MCF 10A (cell line): ENCODE measurements at regions of chr15 and their contacts with region 1.

Region 1: DNA sequence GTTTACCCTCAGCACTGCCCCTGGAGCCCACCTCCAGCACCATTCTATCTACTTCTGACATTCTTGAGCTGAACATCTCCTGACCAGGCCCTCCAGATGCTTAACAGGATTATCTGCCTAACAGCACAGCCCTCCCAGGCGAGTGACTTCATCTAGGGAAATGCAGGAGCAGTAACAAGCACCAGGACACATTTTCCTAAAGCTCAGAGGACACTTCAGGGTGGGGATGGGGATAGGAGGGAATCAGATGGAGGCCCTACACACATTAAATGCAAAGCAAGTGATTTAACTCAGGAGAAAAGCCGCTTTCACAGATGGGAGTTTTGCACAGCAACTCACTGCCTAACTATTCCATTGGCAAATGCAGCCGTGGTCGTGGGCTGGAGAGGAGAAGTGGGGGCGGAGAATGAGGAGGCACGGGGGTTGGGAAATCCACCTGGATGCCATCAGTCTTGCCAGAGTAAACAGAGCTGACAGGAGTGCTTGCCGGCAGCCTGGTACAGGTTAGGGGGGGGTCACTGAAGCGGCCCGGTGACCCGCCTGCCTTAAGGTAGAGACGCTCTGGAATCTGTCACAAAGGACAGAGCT is 21.3 kb upstream of the BNC1 start:
- DNase-seq: peak; percentile 89
- H3K4me3 Mint-ChIP-seq: peak overlapping the region; percentile 24
- H3K27ac Mint-ChIP-seq: peak overlapping the region; percentile 46
- H3K4me1 Mint-ChIP-seq: peaks cover 36% of the 10 kb centered on the region
- H3K27me3 Mint-ChIP-seq: no peaks in the 10 kb centered on the region
- CTCF ChIP-seq: no peak

Region 2: DNA sequence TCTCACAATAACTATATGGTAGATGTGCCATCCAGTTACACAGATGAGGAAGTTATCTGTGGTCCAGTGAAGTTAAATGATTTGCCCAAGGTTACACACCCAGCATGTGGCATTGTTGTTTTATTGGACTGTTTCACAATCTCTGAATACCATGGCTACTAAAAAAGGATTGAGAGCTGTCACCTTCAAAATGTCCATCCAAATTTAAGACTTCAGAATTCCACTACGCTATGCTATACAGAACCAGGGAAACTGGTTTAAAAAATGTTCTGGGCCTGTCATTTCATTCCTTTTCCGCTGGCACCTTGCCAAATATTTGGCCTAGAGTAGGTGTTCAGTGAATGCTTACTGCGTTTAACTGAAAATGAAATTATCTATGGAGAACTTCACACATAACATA is 178.2 kb before region 1 on chr15:
- CTCF ChIA-PET with region 1: no interaction called
- POLR2A ChIA-PET with region 1: no interaction called
- intact Hi-C with region 1: no loop called
- DNase-seq: peak; percentile 21
- H3K4me3 Mint-ChIP-seq: no peak overlapping the region
- H3K27ac Mint-ChIP-seq: no peak overlapping the region
- H3K4me1 Mint-ChIP-seq: no peaks in the 10 kb centered on the region
- H3K27me3 Mint-ChIP-seq: no peaks in the 10 kb centered on the region
- CTCF ChIP-seq: no peak

Region 3: DNA sequence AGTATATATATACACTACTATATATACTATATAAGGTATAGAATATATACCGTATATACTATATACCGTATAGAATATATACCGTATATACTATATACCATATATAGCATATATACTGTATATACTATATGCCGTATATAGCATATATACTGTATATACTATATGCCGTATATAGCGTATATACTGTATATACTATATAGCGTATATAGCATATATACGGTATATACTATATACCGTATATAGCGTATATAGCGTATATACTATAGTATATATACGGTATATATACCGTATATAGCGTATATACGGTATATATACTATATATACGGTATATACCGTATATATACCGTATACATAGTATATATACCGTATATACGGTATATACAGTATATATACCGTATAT is 75.5 kb before region 1 on chr15:
- CTCF ChIA-PET with region 1: no interaction called
- POLR2A ChIA-PET with region 1: no interaction called
- intact Hi-C with region 1: no loop called
- DNase-seq: no peak
- H3K4me3 Mint-ChIP-seq: no peak overlapping the region
- H3K27ac Mint-ChIP-seq: no peak overlapping the region
- H3K4me1 Mint-ChIP-seq: no peaks in the 10 kb centered on the region
- H3K27me3 Mint-ChIP-seq: no peaks in the 10 kb centered on the region
- CTCF ChIP-seq: no peak

Region 4: GRCh38 chr15:83278173-83278572 is 27.6 kb before region 1 on chr15:
- CTCF ChIA-PET with region 1: no interaction called
- POLR2A ChIA-PET with region 1: interaction called, 269 read pairs
- intact Hi-C with region 1: no loop called
- DNase-seq: peak; percentile 70
- H3K4me3 Mint-ChIP-seq: no peak overlapping the region
- H3K27ac Mint-ChIP-seq: peak overlapping the region; percentile 99
- H3K4me1 Mint-ChIP-seq: peaks cover 41% of the 10 kb centered on the region
- H3K27me3 Mint-ChIP-seq: no peaks in the 10 kb centered on the region
- CTCF ChIP-seq: no peak